CD8-positive, alpha-beta T cell (primary cell): ENCODE measurements at regions of chr6 and their contacts with region 1.

Region 1: GRCh38 chr6:159833556-159833955 is 33.5 kb downstream of the PNLDC1 start:
- DNase-seq: no peak
- ATAC-seq: no peak
- H3K4me3 ChIP-seq: no peak overlapping the region
- H3K4me3 Mint-ChIP-seq: peak overlapping the region; percentile 15
- H3K27ac ChIP-seq: no peak overlapping the region
- H3K27ac Mint-ChIP-seq: peak overlapping the region; percentile 49
- H3K4me1 ChIP-seq: peaks cover 30% of the 10 kb centered on the region
- H3K4me1 Mint-ChIP-seq: peaks cover 41% of the 10 kb centered on the region
- H3K27me3 ChIP-seq: no peaks in the 10 kb centered on the region
- H3K27me3 Mint-ChIP-seq: no peaks in the 10 kb centered on the region
- CTCF ChIP-seq: no peak

Region 2: GRCh38 chr6:159819932-159820640 is 13.5 kb before region 1 on chr6:
- CTCF ChIA-PET with region 1: interaction called, 17 read pairs
- POLR2A ChIA-PET with region 1: interaction called, 6 read pairs
- intact Hi-C with region 1: no loop called
- DNase-seq: peak in 7 of 9 experiments; percentile 4 to 61 (median 35)
- ATAC-seq: peak; percentile 76
- H3K4me3 ChIP-seq: peak overlapping the region; percentile 23 to 37
- H3K4me3 Mint-ChIP-seq: peak overlapping the region; percentile 84
- H3K27ac ChIP-seq: peak overlapping the region; percentile 12 to 45
- H3K27ac Mint-ChIP-seq: peak overlapping the region; percentile 94
- H3K4me1 ChIP-seq: peaks cover 23% of the 10 kb centered on the region
- H3K4me1 Mint-ChIP-seq: peaks cover 28% of the 10 kb centered on the region
- H3K27me3 ChIP-seq: no peaks in the 10 kb centered on the region
- H3K27me3 Mint-ChIP-seq: no peaks in the 10 kb centered on the region
- CTCF ChIP-seq: no peak

Region 3: GRCh38 chr6:159852877-159853276 is 19.3 kb after region 1 on chr6:
- CTCF ChIA-PET with region 1: interaction called, 11 read pairs
- POLR2A ChIA-PET with region 1: interaction called, 3 read pairs
- intact Hi-C with region 1: no loop called
- DNase-seq: peak in 3 of 9 experiments; percentile 29 to 56 (median 41)
- ATAC-seq: peak; percentile 58
- H3K4me3 ChIP-seq: no peak overlapping the region
- H3K4me3 Mint-ChIP-seq: no peak overlapping the region
- H3K27ac ChIP-seq: no peak overlapping the region
- H3K27ac Mint-ChIP-seq: no peak overlapping the region
- H3K4me1 ChIP-seq: no peaks in the 10 kb centered on the region
- H3K4me1 Mint-ChIP-seq: peaks cover 8% of the 10 kb centered on the region
- H3K27me3 ChIP-seq: no peaks in the 10 kb centered on the region
- H3K27me3 Mint-ChIP-seq: peaks cover 1% of the 10 kb centered on the region
- CTCF ChIP-seq: peak; percentile 51